ENCODE measurements at regions of chr2 and their contacts with region 1.

Region 1: GRCh38 chr2:38750891-38751595 is at the start of gene SRSF7:
- DNase-seq: peak; percentile 98 to 99
- ATAC-seq: peak; percentile 74 to 90 (median 82)
- H3K4me3 ChIP-seq: peak within 1 kb of the TSS; percentile 92
- H3K4me3 Mint-ChIP-seq: peak within 1 kb of the TSS; percentile 100
- H3K27ac ChIP-seq: peak within 1 kb of the TSS; percentile 99
- H3K27ac Mint-ChIP-seq: peak within 1 kb of the TSS; percentile 100
- H3K4me1 ChIP-seq: peaks cover 33% of the 10 kb centered on the region
- H3K4me1 Mint-ChIP-seq: peaks cover 53 to 54% of the 10 kb centered on the region in 2 donors
- H3K27me3 ChIP-seq: no peaks in the 10 kb centered on the region
- H3K27me3 Mint-ChIP-seq: peaks cover 0 to 4% of the 10 kb centered on the region in 2 donors
- CTCF ChIP-seq: no peak
- total RNA-seq, gene SRSF7: 323 to 538 (median 359) TPM

Region 2: GRCh38 chr2:38377050-38377828 is 373.8 kb before region 1 on chr2 and contains the start of gene ATL2:
- intact Hi-C with region 1: loop called (anchors 2 kb)
- DNase-seq: peak; percentile 89 to 95
- ATAC-seq: peak; percentile 81 to 93 (median 84)
- H3K4me3 ChIP-seq: peak within 1 kb of the TSS; percentile 97
- H3K4me3 Mint-ChIP-seq: peak within 1 kb of the TSS; percentile 99
- H3K27ac ChIP-seq: peak within 1 kb of the TSS; percentile 91
- H3K27ac Mint-ChIP-seq: peak within 1 kb of the TSS; percentile 90 to 95
- H3K4me1 ChIP-seq: peaks cover 14% of the 10 kb centered on the region
- H3K4me1 Mint-ChIP-seq: peaks cover 39 to 47% of the 10 kb centered on the region in 2 donors
- H3K27me3 ChIP-seq: no peaks in the 10 kb centered on the region
- H3K27me3 Mint-ChIP-seq: no peaks in the 10 kb centered on the region
- CTCF ChIP-seq: no peak
- total RNA-seq, gene ATL2: 48.3 to 51.8 (median 51.5) TPM

Region 3: DNA sequence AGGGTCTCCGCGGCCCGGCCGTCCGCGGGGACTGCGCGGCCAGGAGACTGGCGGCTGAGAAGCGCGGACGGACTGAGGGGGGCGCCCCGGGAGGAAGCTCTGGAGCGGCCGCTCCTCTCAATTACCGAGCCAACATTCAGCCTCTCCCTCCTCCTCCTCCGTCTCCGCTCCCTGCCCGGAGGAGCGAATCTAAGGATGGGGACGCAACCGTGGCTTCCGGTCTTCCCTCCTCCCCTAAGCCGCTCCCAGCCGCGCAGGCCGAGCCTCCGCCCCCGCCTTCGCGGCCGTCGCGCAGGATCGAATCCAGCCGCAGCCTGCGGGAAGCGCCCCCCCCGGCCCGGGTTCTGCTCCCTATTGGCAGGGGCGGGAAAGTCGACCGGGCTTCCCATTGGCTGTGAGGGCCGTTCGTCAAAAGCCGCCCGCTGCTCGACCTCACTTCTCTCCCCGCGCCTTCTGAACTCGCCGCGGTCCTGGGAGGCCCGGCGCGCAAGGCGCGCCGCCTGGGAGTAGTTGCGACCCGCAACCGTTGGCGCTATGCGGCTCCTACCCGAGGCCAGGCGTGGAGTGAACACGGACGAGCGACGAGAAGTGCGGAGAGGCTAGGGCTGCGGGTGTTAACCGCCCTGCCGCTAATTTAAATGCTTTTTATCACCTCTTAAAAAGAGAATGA is 148.2 kb before region 1 on chr2 and contains the start of gene HNRNPLL:
- intact Hi-C with region 1: loop called (anchors 1 kb)
- DNase-seq: peak; percentile 77 to 93
- ATAC-seq: peak; percentile 75 to 85 (median 77)
- H3K4me3 ChIP-seq: peak within 1 kb of the TSS; percentile 85
- H3K4me3 Mint-ChIP-seq: peak within 1 kb of the TSS; percentile 90
- H3K27ac ChIP-seq: peak within 1 kb of the TSS; percentile 64
- H3K27ac Mint-ChIP-seq: peak within 1 kb of the TSS; percentile 75 to 77
- H3K4me1 ChIP-seq: peaks cover 16% of the 10 kb centered on the region
- H3K4me1 Mint-ChIP-seq: peaks cover 13 to 23% of the 10 kb centered on the region in 2 donors
- H3K27me3 ChIP-seq: peaks cover 2% of the 10 kb centered on the region
- H3K27me3 Mint-ChIP-seq: peaks cover 14 to 16% of the 10 kb centered on the region in 2 donors
- CTCF ChIP-seq: no peak
- total RNA-seq, gene HNRNPLL: 7.3 to 18.4 (median 8.8) TPM

Region 4: GRCh38 chr2:38778687-38779082 is 27.6 kb after region 1 on chr2:
- intact Hi-C with region 1: loop called (anchors 1 kb)
- DNase-seq: no peak
- ATAC-seq: no peak
- H3K4me3 ChIP-seq: peak overlapping the region; percentile 55
- H3K4me3 Mint-ChIP-seq: peak overlapping the region; percentile 99
- H3K27ac ChIP-seq: peak overlapping the region; percentile 61
- H3K27ac Mint-ChIP-seq: peak overlapping the region; percentile 94 to 95
- H3K4me1 ChIP-seq: peaks cover 12% of the 10 kb centered on the region
- H3K4me1 Mint-ChIP-seq: peaks cover 12% of the 10 kb centered on the region in 2 donors
- H3K27me3 ChIP-seq: no peaks in the 10 kb centered on the region
- H3K27me3 Mint-ChIP-seq: peaks cover 22 to 23% of the 10 kb centered on the region in 2 donors
- CTCF ChIP-seq: no peak

Region 5: DNA sequence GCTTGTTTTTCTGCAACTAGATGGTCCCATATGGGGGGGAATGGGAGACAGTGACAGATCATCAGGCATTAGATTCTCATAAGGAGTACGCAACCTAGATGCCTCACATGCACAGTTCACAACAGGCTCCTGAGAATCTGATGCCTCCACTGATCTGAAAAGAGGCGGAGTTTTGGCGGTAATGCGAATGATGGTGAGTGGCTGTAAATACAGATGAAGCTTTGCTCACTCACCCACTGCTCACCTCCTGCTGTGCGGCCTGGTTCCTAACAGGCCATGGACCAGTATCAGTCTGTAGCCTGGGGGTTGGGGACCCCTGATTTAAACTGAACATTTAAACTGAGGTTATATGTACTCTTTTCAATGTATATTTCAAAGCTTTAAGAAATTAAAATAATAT is 329.1 kb after region 1 on chr2:
- intact Hi-C with region 1: no loop called
- DNase-seq: no peak
- ATAC-seq: no peak
- H3K4me3 ChIP-seq: no peak overlapping the region
- H3K4me3 Mint-ChIP-seq: no peak overlapping the region
- H3K27ac ChIP-seq: no peak overlapping the region
- H3K27ac Mint-ChIP-seq: no peak overlapping the region
- H3K4me1 ChIP-seq: peaks cover under 1% of the 10 kb centered on the region
- H3K4me1 Mint-ChIP-seq: peaks cover 47 to 55% of the 10 kb centered on the region in 2 donors
- H3K27me3 ChIP-seq: no peaks in the 10 kb centered on the region
- H3K27me3 Mint-ChIP-seq: no peaks in the 10 kb centered on the region
- CTCF ChIP-seq: no peak

Region 6: GRCh38 chr2:39124000-39124745 is 373.1 kb after region 1 on chr2:
- intact Hi-C with region 1: loop called (anchors 10 kb)
- DNase-seq: peak; percentile 90 to 98
- ATAC-seq: peak; percentile 75 to 93 (median 80)
- H3K4me3 ChIP-seq: peak overlapping the region; percentile 65
- H3K4me3 Mint-ChIP-seq: peak overlapping the region; percentile 90
- H3K27ac ChIP-seq: peak overlapping the region; percentile 77
- H3K27ac Mint-ChIP-seq: peak overlapping the region; percentile 89 to 96
- H3K4me1 ChIP-seq: peaks cover 38% of the 10 kb centered on the region
- H3K4me1 Mint-ChIP-seq: peaks cover 45 to 51% of the 10 kb centered on the region in 2 donors
- H3K27me3 ChIP-seq: no peaks in the 10 kb centered on the region
- H3K27me3 Mint-ChIP-seq: no peaks in the 10 kb centered on the region
- CTCF ChIP-seq: peak; percentile 62

Measured in natural killer cell (primary cell).